Common myeloid progenitor, CD34-positive (primary cell): ENCODE measurements at regions of chr1 and their contacts with region 1.

Region 1: DNA sequence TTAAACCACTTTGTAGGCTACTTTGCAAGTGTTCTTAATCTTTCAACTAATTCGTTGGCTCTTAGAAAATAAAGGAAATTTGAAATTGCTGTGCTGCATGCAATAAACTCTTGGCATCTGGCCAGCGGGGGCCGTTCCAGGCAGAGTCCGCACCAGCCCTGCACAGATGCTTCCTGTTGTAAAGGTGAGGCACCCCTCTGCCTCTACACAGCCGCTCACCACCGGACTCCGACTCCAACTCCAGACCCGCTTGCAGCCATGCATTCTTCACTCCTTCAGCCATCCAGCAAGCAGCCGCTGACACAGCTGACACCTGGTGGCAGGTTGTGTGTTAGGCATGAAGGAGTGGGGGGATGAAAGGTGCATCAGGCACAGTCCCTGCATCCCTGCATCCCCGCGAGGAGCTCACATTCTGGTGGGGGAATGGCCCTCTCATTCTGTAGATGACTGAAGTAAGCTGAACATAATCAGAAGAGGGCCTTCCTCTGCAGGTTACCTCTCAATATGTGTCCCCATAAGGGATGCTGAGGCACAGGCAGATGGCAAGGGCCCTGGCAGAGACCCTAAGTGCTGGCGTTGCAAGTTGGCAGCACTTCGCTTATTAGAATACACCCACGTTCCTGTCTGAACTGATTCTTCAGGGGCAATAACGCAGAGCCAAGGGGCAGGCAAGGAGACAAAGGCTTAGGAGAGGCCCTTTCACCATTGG is 56.8 kb downstream of the GLIS1 start:
- DNase-seq: peak; percentile 90 to 98 (median 97)
- H3K4me3 ChIP-seq: peak overlapping the region in 4 of 7 experiments; percentile 26 to 53 (median 32)
- H3K27ac ChIP-seq: peak overlapping the region in 1 of 2 experiments; percentile 63
- H3K4me1 ChIP-seq: peaks cover 14 to 77% (median 65%) of the 10 kb centered on the region in 4 experiments
- H3K27me3 ChIP-seq: peaks cover 0 to 13% (median 0%) of the 10 kb centered on the region in 5 experiments

Region 2: GRCh38 chr1:53450225-53450624 is 231.9 kb before region 1 on chr1:
- CTCF ChIA-PET with region 1: no interaction called
- POLR2A ChIA-PET with region 1: no interaction called
- DNase-seq: peak in 2 of 3 donors; percentile 12 to 23
- H3K4me3 ChIP-seq: no peak overlapping the region
- H3K27ac ChIP-seq: no peak overlapping the region
- H3K4me1 ChIP-seq: no peaks in the 10 kb centered on the region
- H3K27me3 ChIP-seq: peaks cover 0 to 2% (median 0%) of the 10 kb centered on the region in 5 experiments

Region 3: GRCh38 chr1:53485478-53486394 is 196.4 kb before region 1 on chr1:
- CTCF ChIA-PET with region 1: interaction called, 83 read pairs
- POLR2A ChIA-PET with region 1: no interaction called
- DNase-seq: peak; percentile 78 to 92 (median 87)
- H3K4me3 ChIP-seq: no peak overlapping the region
- H3K27ac ChIP-seq: no peak overlapping the region
- H3K4me1 ChIP-seq: peaks cover 0 to 5% (median 0%) of the 10 kb centered on the region in 4 experiments
- H3K27me3 ChIP-seq: peaks cover 0 to 2% (median 0%) of the 10 kb centered on the region in 5 experiments

Region 4: GRCh38 chr1:53552146-53552940 is 129.8 kb before region 1 on chr1:
- CTCF ChIA-PET with region 1: no interaction called
- POLR2A ChIA-PET with region 1: no interaction called
- DNase-seq: peak in 1 of 3 donors; percentile 13
- H3K4me3 ChIP-seq: no peak overlapping the region
- H3K27ac ChIP-seq: no peak overlapping the region
- H3K4me1 ChIP-seq: peaks cover 0 to 3% (median 0%) of the 10 kb centered on the region in 4 experiments
- H3K27me3 ChIP-seq: no peaks in the 10 kb centered on the region

Region 5: DNA sequence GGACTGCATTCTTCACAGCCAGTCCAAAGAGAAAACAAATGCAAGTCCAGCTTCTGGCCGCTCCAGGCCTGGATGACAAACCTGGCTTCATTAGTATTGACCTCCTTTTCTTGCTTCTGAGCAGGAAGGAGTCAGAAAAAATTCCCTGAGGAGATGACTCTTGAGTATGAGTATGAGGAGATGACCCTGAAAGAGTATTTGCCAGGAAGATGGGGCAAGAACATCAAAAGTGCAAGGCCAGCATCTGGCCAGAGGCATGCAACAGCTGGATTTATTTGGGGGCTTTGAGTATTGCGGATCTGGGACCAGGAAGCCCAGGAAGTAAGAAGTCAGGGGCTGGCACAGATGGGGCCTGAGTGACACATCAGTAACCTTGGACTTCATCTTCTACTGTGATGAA is 57.1 kb before region 1 on chr1:
- CTCF ChIA-PET with region 1: no interaction called
- POLR2A ChIA-PET with region 1: no interaction called
- DNase-seq: no peak
- H3K4me3 ChIP-seq: no peak overlapping the region
- H3K27ac ChIP-seq: no peak overlapping the region
- H3K4me1 ChIP-seq: no peaks in the 10 kb centered on the region
- H3K27me3 ChIP-seq: no peaks in the 10 kb centered on the region

Region 6: DNA sequence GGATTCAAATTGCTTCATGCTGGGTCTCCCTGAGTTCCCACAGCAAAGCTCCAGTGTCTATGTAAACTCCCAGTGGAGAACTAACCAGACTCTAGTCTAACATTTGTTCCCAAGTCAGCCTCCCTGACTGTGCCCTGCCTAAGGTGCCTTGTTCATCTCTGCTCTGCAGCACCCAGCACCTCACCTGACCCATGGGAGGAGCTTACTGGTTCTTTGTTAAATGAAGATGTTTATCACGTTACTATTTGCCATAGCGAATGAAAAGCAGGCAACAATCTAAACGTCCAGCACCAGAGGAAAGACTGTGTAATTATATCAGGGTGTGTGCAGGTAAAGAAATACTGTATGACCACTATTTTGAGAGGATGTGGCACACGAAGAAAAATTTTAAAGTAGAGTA is 11.5 kb before region 1 on chr1:
- CTCF ChIA-PET with region 1: interaction called, 10 read pairs
- POLR2A ChIA-PET with region 1: no interaction called
- DNase-seq: no peak
- H3K4me3 ChIP-seq: no peak overlapping the region
- H3K27ac ChIP-seq: no peak overlapping the region
- H3K4me1 ChIP-seq: no peaks in the 10 kb centered on the region
- H3K27me3 ChIP-seq: no peaks in the 10 kb centered on the region

Region 7: GRCh38 chr1:53693773-53694717 is 11.9 kb after region 1 on chr1:
- CTCF ChIA-PET with region 1: interaction called, 10 read pairs
- POLR2A ChIA-PET with region 1: no interaction called
- DNase-seq: no peak
- H3K4me3 ChIP-seq: no peak overlapping the region
- H3K27ac ChIP-seq: no peak overlapping the region
- H3K4me1 ChIP-seq: peaks cover 0 to 7% (median 1%) of the 10 kb centered on the region in 4 experiments
- H3K27me3 ChIP-seq: no peaks in the 10 kb centered on the region